ENCODE measurements at regions of chr6 and their contacts with region 1.

Region 1: GRCh38 chr6:135438907-135439535 is 58.5 kb downstream of the AHI1 start:
- DNase-seq: peak; percentile 34
- H3K4me3 ChIP-seq: no peak overlapping the region
- H3K27ac ChIP-seq: no peak overlapping the region
- H3K4me1 ChIP-seq: no peaks in the 10 kb centered on the region
- H3K27me3 ChIP-seq: no peaks in the 10 kb centered on the region

Region 2: DNA sequence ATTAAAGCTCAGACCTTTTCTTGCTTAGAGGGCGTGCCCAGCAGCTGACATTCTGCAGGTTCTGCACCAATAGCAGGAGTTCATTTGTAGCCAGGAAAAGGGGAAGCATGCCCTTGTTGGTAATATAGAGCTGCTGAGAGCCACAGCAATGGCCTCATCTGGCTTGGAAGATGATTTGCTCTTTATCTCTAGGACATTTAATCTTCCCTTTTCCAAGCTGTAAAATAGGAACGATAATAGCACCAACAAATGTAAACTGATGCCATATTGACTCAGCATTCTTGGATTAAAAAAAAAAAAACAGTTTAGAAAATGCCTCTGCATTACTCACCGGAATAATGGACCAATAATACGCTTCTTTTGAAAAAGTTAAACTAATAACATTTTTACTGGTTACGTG is 1293.2 kb before region 1 on chr6:
- in situ Hi-C with region 1: loop called (anchors 25 kb)
- DNase-seq: peak; percentile 37
- H3K4me3 ChIP-seq: no peak overlapping the region
- H3K27ac ChIP-seq: no peak overlapping the region
- H3K4me1 ChIP-seq: peaks cover 8% of the 10 kb centered on the region; the same call in 1 of the 2 replicates
- H3K27me3 ChIP-seq: no peaks in the 10 kb centered on the region

Region 3: DNA sequence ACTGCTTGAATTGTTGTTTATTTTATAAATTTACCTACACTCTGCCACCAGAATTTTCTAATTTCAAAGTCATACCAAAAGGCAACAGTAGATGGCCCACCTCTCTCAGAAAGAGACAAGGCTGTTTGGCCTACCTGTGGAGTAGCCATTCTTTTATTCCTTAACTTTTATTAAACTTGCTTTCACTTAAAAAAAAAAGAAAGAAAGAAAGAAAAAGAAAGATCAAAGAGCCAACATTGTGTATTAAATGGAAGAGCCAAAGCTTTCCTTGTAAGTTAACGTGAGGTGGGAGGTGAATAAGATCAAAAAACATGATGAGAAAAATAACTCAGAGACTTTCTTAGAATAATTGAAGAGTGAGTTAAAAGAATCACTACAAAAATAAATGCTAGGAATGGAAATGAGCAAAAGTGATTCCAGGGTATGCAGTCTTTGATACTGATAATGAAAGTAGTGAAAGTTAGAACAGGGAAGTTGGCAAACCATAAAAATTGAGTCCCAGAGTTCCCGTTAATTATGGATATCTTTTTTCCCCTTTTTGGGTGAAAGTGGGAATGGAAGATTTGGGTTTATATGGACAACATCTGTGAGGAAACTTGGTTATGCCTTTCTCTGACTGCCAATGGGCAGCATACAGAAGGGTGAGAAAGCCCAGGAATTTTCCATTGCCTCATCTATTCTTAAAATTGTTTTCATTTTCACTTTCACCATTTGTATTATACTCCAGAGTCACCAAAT is 293.8 kb before region 1 on chr6:
- in situ Hi-C with region 1: loop called (anchors 10 kb)
- DNase-seq: peak; percentile 56
- H3K4me3 ChIP-seq: no peak overlapping the region
- H3K27ac ChIP-seq: no peak overlapping the region
- H3K4me1 ChIP-seq: peaks cover 10% of the 10 kb centered on the region; the same call in 1 of the 2 replicates
- H3K27me3 ChIP-seq: no peaks in the 10 kb centered on the region

Measured in GM23248 (cell line).